ENCODE measurements at regions of chr5 and their contacts with region 1.

Region 1: DNA sequence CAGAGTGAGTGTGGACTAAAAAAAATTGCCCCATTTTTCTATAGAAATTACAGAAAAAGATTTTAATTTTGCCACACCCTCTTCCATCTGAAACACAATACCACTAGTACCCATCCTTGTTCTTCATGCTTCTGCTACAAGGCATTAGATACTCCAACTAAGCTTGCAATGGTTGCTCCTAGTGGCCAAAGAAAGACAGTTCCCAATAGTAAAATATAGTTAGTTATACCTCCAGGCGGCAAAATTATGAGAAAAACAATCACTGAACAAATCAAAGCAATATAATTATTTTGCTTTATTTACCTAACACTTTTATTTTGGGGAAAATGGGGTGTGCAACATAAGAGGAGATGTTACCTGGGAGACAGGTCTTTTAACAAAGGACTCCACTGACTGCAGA is 101.2 kb downstream of the RAPGEF6 start:
- DNase-seq: no peak
- H3K4me3 ChIP-seq: no peak overlapping the region
- H3K27ac ChIP-seq: no peak overlapping the region
- H3K4me1 ChIP-seq: peaks cover 32% of the 10 kb centered on the region
- H3K27me3 ChIP-seq: no peaks in the 10 kb centered on the region
- CTCF ChIP-seq: peak; percentile 4 to 19
- POLR2A ChIP-seq: no peak

Region 2: DNA sequence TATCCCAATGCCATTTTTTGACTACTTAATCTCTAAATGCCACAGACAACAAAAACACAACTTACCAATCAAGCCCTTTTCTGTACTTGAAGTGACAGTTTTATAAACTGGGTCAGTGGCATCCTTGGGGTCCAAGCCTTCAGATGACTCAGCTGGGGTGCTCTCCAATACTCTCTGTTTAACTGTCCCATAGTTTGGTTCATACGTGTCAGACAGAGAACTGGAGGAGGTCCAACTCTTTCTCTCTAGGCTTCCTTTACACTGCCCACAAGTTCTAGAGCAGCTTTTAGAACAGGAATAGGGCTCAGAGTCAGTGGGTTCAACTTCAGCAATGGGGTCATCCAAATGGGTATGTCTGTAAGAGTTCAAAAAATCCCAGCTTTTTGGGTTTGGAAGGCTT is 103.0 kb before region 1 on chr5:
- CTCF ChIA-PET with region 1: interaction called, 4 read pairs
- POLR2A ChIA-PET with region 1: no interaction called
- dilution Hi-C with region 1: no loop called
- intact Hi-C with region 1: loop called (anchors 5 kb)
- DNase-seq: no peak
- H3K4me3 ChIP-seq: no peak overlapping the region
- H3K27ac ChIP-seq: no peak overlapping the region
- H3K4me1 ChIP-seq: no peaks in the 10 kb centered on the region
- H3K27me3 ChIP-seq: no peaks in the 10 kb centered on the region
- CTCF ChIP-seq: no peak
- POLR2A ChIP-seq: no peak

Region 3: GRCh38 chr5:131505237-131505908 is 28.5 kb before region 1 on chr5:
- CTCF ChIA-PET with region 1: interaction called, 15 read pairs
- POLR2A ChIA-PET with region 1: no interaction called
- dilution Hi-C with region 1: no loop called
- intact Hi-C with region 1: no loop called
- DNase-seq: peak; percentile 82
- H3K4me3 ChIP-seq: no peak overlapping the region
- H3K27ac ChIP-seq: peak overlapping the region; percentile 37
- H3K4me1 ChIP-seq: peaks cover 15% of the 10 kb centered on the region
- H3K27me3 ChIP-seq: no peaks in the 10 kb centered on the region
- CTCF ChIP-seq: no peak
- POLR2A ChIP-seq: no peak

Region 4: DNA sequence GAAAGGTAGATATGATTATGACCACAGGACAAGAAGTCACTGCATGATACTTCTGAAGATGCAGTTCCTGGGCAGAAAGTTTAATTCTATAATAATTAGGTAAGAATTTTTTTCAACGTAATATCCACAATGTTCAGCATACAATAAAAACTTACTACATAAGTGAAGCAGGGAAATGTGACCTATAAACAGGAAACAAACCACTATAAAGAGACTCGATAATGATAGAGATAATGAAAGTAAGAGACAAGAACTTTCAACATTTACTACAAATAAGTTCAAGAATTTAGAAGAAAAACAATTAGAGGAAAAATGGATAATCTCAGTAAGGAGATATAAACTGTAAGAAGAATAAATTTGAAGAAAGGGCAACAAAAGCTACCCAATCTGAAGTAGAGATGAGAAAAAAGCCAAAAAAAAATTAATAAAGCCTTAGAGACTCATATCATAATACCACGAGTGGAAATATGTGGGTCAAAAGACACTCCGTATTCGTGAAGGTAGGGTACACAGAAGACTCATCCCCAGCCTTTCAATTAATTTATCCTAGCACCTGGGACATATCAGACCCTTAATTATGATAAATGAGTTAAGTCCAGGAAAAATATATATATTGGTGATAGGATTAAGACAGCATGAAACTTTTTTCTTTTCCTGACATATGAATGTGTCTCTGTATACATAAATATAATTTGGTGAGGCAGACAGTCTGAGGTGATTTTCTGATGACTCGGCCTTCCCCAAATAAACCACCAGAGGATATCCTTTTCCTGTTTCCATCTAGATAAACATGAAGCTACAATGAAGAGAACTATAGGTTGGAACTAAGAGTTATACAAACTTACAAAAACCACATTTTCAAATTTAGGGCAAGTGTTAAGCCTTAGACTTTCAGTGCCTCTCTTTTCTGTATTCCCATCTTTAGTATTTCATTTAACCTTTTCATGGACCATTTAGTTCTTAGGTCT is 19.2 kb before region 1 on chr5:
- CTCF ChIA-PET with region 1: interaction called, 4 read pairs
- POLR2A ChIA-PET with region 1: no interaction called
- dilution Hi-C with region 1: no loop called
- intact Hi-C with region 1: loop called (anchors 1 kb)
- DNase-seq: peak; percentile 85
- H3K4me3 ChIP-seq: peak overlapping the region; percentile 7 to 77 (median 49)
- H3K27ac ChIP-seq: peak overlapping the region; percentile 86
- H3K4me1 ChIP-seq: peaks cover 18% of the 10 kb centered on the region
- H3K27me3 ChIP-seq: no peaks in the 10 kb centered on the region
- CTCF ChIP-seq: no peak
- POLR2A ChIP-seq: no peak

Region 5: DNA sequence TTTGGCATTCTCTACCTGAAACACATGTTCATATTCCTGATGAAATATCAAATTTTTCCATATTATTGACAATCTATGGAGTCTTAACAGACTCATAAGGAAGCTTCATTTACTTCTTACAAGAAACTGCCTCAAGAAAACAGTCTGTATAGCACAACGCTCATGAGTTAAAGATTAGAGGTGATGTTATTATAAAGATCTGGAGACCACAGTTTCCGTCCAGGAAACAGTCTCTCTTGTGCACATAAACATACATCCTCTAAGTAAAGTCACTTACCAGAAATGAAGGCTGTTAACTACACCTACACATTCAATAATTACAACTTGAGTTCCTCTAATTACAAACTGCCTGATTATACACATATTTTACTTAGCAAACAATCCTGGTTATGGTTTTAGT is 14.3 kb after region 1 on chr5:
- CTCF ChIA-PET with region 1: interaction called, 6 read pairs
- POLR2A ChIA-PET with region 1: no interaction called
- dilution Hi-C with region 1: no loop called
- intact Hi-C with region 1: loop called (anchors 2 kb)
- DNase-seq: peak; percentile 88
- H3K4me3 ChIP-seq: no peak overlapping the region
- H3K27ac ChIP-seq: no peak overlapping the region
- H3K4me1 ChIP-seq: peaks cover 19% of the 10 kb centered on the region
- H3K27me3 ChIP-seq: no peaks in the 10 kb centered on the region
- CTCF ChIP-seq: no peak
- POLR2A ChIP-seq: no peak

Region 6: DNA sequence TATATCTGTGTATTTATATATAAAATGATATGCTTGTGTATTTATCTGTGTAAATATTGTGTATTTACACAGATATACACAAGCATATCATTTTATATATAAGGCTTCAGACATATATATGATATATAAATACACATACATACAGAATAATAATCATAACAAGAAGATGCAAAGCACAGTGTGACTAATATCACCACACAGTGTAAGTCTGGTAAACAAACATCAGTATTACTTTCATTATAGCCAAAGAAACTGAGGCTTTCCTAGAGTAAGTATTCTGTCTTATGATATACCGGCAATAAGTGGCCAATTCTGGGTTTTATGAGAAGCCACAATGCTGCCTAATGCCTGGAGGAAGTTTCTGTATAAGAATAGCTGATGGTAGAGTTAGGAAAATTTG is 131.1 kb after region 1 on chr5:
- CTCF ChIA-PET with region 1: no interaction called
- POLR2A ChIA-PET with region 1: no interaction called
- dilution Hi-C with region 1: no loop called
- intact Hi-C with region 1: no loop called
- DNase-seq: no peak
- H3K4me3 ChIP-seq: no peak overlapping the region
- H3K27ac ChIP-seq: no peak overlapping the region
- H3K4me1 ChIP-seq: no peaks in the 10 kb centered on the region
- H3K27me3 ChIP-seq: no peaks in the 10 kb centered on the region
- CTCF ChIP-seq: no peak
- POLR2A ChIP-seq: no peak

Measured in endothelial cell of umbilical vein (primary cell).